Left cardiac atrium (tissue), 4 donors: ENCODE measurements at regions of chr17 and their contacts with region 1.

Region 1: GRCh38 chr17:43940630-43941029 is 1.6 kb downstream of the PPY start:
- DNase-seq: no peak
- ATAC-seq: peak in 1 of 2 donors; percentile 13

Region 2: DNA sequence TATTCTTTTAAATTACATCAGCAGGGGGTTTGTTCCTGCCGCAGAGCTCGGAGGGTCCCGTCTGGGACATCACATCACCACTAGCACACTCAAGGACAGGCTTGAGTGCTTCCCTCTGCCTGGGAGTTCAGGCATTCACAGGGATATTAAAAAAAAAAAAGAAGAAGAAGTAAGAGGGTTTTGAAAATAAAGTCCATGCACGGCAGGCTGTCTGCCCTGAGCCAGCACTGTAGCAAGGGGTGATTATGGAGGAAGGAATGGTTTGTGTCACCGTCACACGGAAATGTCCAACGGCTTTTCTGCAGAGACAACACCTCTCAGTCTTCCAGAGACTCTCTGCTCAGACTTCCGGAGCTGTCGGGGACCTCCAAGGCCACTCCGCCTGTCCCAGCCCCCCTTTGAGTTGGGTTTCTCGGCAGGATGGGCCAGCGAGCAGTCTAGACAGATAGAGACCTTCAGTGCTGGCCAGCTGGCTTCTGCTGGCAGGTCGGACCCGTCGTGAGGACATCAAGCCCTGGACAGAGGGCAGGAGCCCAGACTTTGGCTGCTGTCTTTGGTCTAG is 312.5 kb before region 1 on chr17:
- intact Hi-C with region 1: no loop called
- DNase-seq: peak; percentile 46
- ATAC-seq: peak; percentile 44 to 86

Region 3: GRCh38 chr17:43891851-43892646 is 48.6 kb before region 1 on chr17:
- intact Hi-C with region 1: no loop called
- DNase-seq: no peak
- ATAC-seq: no peak

Region 4: GRCh38 chr17:43994272-43995149 is 53.9 kb after region 1 on chr17:
- intact Hi-C with region 1: loop called (anchors 2 kb)
- DNase-seq: peak; percentile 80
- ATAC-seq: peak; percentile 93 to 96

Region 5: GRCh38 chr17:44006598-44007345 is 66.1 kb after region 1 on chr17:
- intact Hi-C with region 1: no loop called
- DNase-seq: peak; percentile 99
- ATAC-seq: peak; percentile 93 to 95